Tibial artery (tissue), 4 donors: ENCODE measurements at regions of chr16 and their contacts with region 1.

Region 1: DNA sequence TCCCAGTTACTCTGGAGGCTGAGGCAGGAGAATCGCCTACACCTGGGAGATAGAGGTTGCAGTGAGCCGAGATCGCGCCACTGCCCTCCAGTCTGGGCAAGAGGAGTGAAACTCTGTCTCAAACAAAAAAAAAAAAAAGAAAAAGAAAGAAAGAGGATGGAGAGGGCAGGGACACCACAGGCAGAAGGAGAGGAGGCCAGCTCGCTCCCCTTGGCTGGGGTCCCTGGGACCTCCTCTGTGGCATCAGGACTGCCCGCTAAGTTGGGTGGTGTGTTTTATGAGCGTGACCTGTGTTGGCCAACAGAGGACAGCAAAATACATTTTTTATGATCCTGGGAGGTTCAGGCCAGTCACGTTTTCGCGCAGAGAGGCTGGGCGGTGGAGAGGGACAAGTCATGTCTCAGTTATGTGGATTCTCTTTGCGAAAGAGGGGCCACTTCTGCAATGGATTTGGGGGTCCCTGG is 229.6 kb downstream of the MRTFB start:
- DNase-seq: peak; percentile 87 to 91
- H3K4me3 ChIP-seq: peak overlapping the region; percentile 82 to 100
- H3K27ac ChIP-seq: peak overlapping the region; percentile 87 to 91
- H3K4me1 ChIP-seq: peaks cover 0 to 26% (median 16%) of the 10 kb centered on the region in 4 donors
- H3K27me3 ChIP-seq: no peaks in the 10 kb centered on the region
- CTCF ChIP-seq: peak; percentile 61 to 77

Region 2: GRCh38 chr16:14629919-14630619 is 329.3 kb after region 1 on chr16 and contains the start of gene PARN:
- intact Hi-C with region 1: loop called (anchors 10 kb)
- DNase-seq: peak; percentile 95 to 98
- H3K4me3 ChIP-seq: peak within 1 kb of the TSS; percentile 79 to 89
- H3K27ac ChIP-seq: peak within 1 kb of the TSS; percentile 88 to 90
- H3K4me1 ChIP-seq: peaks cover 0 to 46% (median 25%) of the 10 kb centered on the region in 4 donors
- H3K27me3 ChIP-seq: no peaks in the 10 kb centered on the region
- CTCF ChIP-seq: peak in 1 of 2 experiments; percentile 13